ENCODE measurements at regions of chr13 and their contacts with region 1.

Region 1: DNA sequence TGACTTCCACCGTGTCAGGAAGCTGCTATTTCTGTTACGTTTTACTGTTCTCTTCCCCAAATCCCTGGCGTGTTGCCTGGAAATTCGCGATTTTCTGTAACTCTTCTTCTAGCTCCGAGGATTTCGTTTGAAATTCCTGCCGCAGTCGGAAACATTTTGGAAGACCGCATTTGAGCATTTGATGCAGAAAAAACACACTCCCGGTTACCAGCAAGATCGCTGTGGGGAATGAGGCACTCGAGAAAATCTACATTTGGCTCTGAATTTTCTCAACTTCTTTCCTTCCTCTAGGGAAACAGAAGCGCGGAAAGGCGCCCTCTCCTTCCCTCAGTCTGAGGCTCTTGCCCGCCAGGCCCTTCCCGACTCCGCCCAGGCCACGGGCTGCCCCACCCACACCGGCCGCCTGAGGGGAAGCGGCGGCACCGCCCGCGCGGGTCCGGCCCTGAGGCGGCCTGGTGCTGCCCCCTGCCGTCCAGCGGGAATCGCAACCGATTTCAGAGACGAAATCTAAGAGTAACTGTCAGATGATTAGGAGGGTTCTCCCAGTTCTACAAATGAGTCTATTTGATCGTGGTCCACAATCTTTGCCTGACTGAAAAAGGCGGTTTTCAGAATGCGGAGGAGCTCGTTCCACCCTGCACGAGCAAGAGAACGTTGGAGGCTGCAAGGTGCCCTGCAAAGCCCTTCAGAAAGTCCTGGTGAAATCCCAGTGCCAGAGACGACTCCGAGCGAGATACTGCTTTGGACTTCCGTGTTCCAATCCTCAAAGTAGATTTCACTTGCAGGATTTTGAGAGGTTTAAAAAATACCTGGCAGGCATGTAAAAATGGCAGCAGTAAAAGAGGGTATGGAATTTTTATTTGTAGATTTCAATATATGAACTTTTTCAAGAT is 18.4 kb upstream of the TUBGCP3 start:
- DNase-seq: peak; percentile 93 to 97
- H3K4me3 ChIP-seq: peak overlapping the region; percentile 41
- H3K4me3 Mint-ChIP-seq: peak overlapping the region; percentile 73
- H3K27ac Mint-ChIP-seq: peak overlapping the region; percentile 23
- H3K4me1 ChIP-seq: no peaks in the 10 kb centered on the region
- H3K4me1 Mint-ChIP-seq: no peaks in the 10 kb centered on the region
- H3K27me3 ChIP-seq: peaks cover 1% of the 10 kb centered on the region
- H3K27me3 Mint-ChIP-seq: peaks cover 15% of the 10 kb centered on the region
- CTCF ChIP-seq: peak; percentile 85 to 89

Region 2: GRCh38 chr13:112346173-112346898 is 260.0 kb before region 1 on chr13:
- CTCF ChIA-PET with region 1: no interaction called
- POLR2A ChIA-PET with region 1: no interaction called
- intact Hi-C with region 1: loop called (anchors 10 kb)
- DNase-seq: peak in 1 of 2 experiments; percentile 17
- H3K4me3 ChIP-seq: no peak overlapping the region
- H3K4me3 Mint-ChIP-seq: no peak overlapping the region
- H3K27ac Mint-ChIP-seq: no peak overlapping the region
- H3K4me1 ChIP-seq: no peaks in the 10 kb centered on the region
- H3K4me1 Mint-ChIP-seq: no peaks in the 10 kb centered on the region
- H3K27me3 ChIP-seq: peaks cover 5% of the 10 kb centered on the region
- H3K27me3 Mint-ChIP-seq: peaks cover 38% of the 10 kb centered on the region
- CTCF ChIP-seq: no peak

Region 3: DNA sequence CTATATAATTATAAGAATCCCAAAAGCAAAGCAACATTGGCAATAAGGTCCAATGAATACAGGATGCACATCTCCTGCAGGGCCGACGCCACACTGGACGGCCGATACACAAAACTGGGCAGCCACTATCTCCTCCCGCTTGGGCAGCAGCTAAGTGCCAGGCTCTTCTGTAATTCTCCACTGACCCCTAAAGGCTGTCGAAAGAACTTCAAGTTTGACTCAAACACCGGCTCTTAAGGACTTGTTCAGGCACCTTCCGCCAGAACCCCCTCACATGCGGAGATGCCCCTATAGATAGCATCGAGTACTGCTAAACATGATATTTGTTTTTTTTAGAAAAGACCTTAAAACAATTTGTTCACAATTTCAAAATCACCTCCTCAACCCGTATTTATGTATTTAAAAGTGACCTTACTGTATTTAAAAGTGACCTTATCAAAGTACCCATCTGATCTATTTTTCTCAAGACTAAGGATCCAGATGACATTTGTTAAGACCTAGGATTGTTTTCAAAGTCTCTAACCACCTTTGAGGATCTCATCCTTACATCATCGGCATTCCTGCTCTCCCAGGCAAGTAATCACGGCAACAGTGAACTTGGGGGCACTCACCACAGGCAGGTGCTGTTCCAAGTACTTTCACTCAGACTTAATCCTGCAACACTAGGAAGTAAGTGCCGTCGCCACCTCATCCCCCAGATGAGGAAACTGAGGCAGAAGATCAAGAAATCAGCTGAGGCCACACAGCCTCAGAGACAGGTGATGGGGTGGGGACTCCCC is 96.2 kb before region 1 on chr13:
- CTCF ChIA-PET with region 1: no interaction called
- POLR2A ChIA-PET with region 1: no interaction called
- intact Hi-C with region 1: loop called (anchors 1 kb)
- DNase-seq: peak; percentile 53 to 69
- H3K4me3 ChIP-seq: no peak overlapping the region
- H3K4me3 Mint-ChIP-seq: no peak overlapping the region
- H3K27ac Mint-ChIP-seq: peak overlapping the region; percentile 25
- H3K4me1 ChIP-seq: peaks cover 13% of the 10 kb centered on the region
- H3K4me1 Mint-ChIP-seq: peaks cover 5% of the 10 kb centered on the region
- H3K27me3 ChIP-seq: no peaks in the 10 kb centered on the region
- H3K27me3 Mint-ChIP-seq: no peaks in the 10 kb centered on the region
- CTCF ChIP-seq: peak; percentile 57 to 65

Region 4: GRCh38 chr13:112587764-112588489 is 18.4 kb before region 1 on chr13 and contains the start of gene TUBGCP3:
- CTCF ChIA-PET with region 1: interaction called, 5 read pairs
- POLR2A ChIA-PET with region 1: no interaction called
- intact Hi-C with region 1: loop called (anchors 1 kb)
- DNase-seq: peak; percentile 89 to 91
- H3K4me3 ChIP-seq: peak within 1 kb of the TSS; percentile 98
- H3K4me3 Mint-ChIP-seq: peak within 1 kb of the TSS; percentile 92
- H3K27ac Mint-ChIP-seq: peak within 1 kb of the TSS; percentile 96
- H3K4me1 ChIP-seq: peaks cover 15% of the 10 kb centered on the region
- H3K4me1 Mint-ChIP-seq: peaks cover 21% of the 10 kb centered on the region
- H3K27me3 ChIP-seq: no peaks in the 10 kb centered on the region
- H3K27me3 Mint-ChIP-seq: no peaks in the 10 kb centered on the region
- CTCF ChIP-seq: no peak
- total RNA-seq, gene TUBGCP3: 51.1 and 55.7 TPM in 2 replicates

Measured in Caco-2 (cell line).